ENCODE measurements at regions of chr15 and their contacts with region 1.

Region 1: DNA sequence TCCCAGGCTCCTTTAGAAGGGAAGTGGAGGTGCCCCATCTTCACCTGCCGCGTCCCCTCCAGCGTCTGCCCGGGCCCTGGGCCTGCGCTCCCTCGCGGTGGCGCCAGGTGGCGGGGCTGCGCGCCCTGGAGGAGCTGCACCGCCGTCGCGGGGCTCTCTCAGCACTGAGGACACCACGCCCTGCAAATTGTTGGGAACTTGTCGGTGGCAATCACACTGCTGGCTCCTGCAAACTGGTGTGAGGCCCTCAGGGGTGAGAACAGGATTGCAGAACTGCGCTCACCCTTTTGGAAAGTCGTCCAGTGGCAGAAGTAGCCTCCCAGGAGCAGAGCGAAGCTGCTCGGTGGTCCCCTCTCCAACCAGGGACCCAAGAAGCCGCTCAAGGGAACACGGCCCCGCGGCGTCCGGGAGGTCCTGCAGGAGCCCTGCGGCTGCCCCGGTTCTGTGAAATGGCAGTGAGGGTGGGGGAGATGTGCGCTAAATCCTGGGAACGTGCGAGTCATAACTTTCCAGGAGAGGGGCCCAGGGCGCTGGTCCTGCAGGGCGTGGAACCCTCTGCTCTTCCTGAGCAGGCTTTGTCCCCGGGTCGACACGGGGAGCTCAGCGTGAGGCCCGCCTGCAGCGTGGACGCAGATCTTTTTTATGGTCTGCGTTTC is 995 bp upstream of the LRRK1 start:
- DNase-seq: peak; percentile 95
- H3K4me3 Mint-ChIP-seq: peak overlapping the region; percentile 82
- H3K27ac Mint-ChIP-seq: peak overlapping the region; percentile 82
- H3K4me1 Mint-ChIP-seq: peaks cover 41% of the 10 kb centered on the region
- H3K27me3 Mint-ChIP-seq: no peaks in the 10 kb centered on the region
- CTCF ChIP-seq: peak; percentile 96

Region 2: GRCh38 chr15:100627789-100628395 is 290.3 kb before region 1 on chr15:
- CTCF ChIA-PET with region 1: no interaction called
- intact Hi-C with region 1: loop called (anchors 2 kb)
- DNase-seq: peak; percentile 76
- H3K4me3 Mint-ChIP-seq: no peak overlapping the region
- H3K27ac Mint-ChIP-seq: no peak overlapping the region
- H3K4me1 Mint-ChIP-seq: peaks cover 14% of the 10 kb centered on the region
- H3K27me3 Mint-ChIP-seq: no peaks in the 10 kb centered on the region
- CTCF ChIP-seq: peak; percentile 61

Region 3: GRCh38 chr15:100929641-100930042 is 11.5 kb after region 1 on chr15:
- CTCF ChIA-PET with region 1: interaction called, 11 read pairs
- intact Hi-C with region 1: no loop called
- DNase-seq: no peak
- H3K4me3 Mint-ChIP-seq: no peak overlapping the region
- H3K27ac Mint-ChIP-seq: no peak overlapping the region
- H3K4me1 Mint-ChIP-seq: peaks cover 26% of the 10 kb centered on the region
- H3K27me3 Mint-ChIP-seq: no peaks in the 10 kb centered on the region
- CTCF ChIP-seq: no peak

Measured in Calu3 (cell line).